ENCODE measurements at regions of chr2 and their contacts with region 1.

Region 1: GRCh38 chr2:12787891-12788801 is 71.4 kb downstream of the TRIB2 start:
- DNase-seq: peak in 1 of 2 donors; percentile 43
- ATAC-seq: peak; percentile 57 to 93 (median 84)
- H3K4me3 ChIP-seq: peak overlapping the region in 2 of 10 donors; percentile 3 to 13
- H3K27ac ChIP-seq: peak overlapping the region; percentile 19 to 87 (median 68)
- H3K4me1 ChIP-seq: peaks cover 0 to 20% (median 16%) of the 10 kb centered on the region in 9 donors
- H3K27me3 ChIP-seq: no peaks in the 10 kb centered on the region
- CTCF ChIP-seq: no peak

Region 2: GRCh38 chr2:12742891-12743290 is 45.3 kb before region 1 on chr2:
- intact Hi-C with region 1: loop called in 3 of 10 experiments (anchors 5 to 10 kb)
- DNase-seq: no peak
- ATAC-seq: no peak
- H3K4me3 ChIP-seq: no peak overlapping the region
- H3K27ac ChIP-seq: no peak overlapping the region
- H3K4me1 ChIP-seq: peaks cover 0 to 40% (median 13%) of the 10 kb centered on the region in 9 donors
- H3K27me3 ChIP-seq: no peaks in the 10 kb centered on the region
- CTCF ChIP-seq: no peak